ENCODE measurements at regions of chr1 and their contacts with region 1.

Region 1: GRCh38 chr1:198937231-198938031 is 298.6 kb downstream of the PTPRC start:
- DNase-seq: peak; percentile 65
- ATAC-seq: peak; percentile 93
- H3K4me3 Mint-ChIP-seq: no peak overlapping the region
- H3K27ac Mint-ChIP-seq: peak overlapping the region; percentile 85
- H3K4me1 Mint-ChIP-seq: peaks cover 21% of the 10 kb centered on the region
- H3K27me3 Mint-ChIP-seq: no peaks in the 10 kb centered on the region

Region 2: DNA sequence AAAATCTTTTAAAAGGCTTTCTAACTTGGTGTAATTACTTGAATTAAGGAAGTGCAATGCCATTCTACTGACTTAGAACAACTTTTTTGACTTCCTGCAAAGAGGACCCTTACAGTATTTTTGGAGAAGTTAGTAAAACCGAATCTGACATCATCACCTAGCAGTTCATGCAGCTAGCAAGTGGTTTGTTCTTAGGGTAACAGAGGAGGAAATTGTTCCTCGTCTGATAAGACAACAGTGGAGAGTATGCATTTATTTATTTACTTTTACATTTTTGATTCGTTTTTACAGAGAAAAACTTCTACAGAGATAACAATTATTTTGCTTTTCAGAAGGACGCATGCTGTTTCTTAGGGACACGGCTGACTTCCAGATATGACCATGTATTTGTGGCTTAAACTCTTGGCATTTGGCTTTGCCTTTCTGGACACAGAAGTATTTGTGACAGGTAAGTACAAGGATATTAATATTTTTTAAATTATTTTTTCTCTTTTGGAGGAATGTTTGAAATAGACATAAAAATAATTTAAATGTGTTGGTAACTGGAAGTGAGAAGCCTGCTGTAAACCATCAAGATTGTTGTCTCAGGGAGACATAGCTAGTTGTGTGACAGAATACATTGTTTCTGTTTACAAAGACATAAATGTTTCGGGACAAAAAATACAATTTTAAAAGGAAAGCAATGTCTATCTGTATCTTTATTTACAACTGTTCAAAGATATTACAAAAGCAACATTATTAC is 298.4 kb before region 1 on chr1 and contains the start of gene PTPRC:
- CTCF ChIA-PET with region 1: no interaction called
- POLR2A ChIA-PET with region 1: no interaction called
- intact Hi-C with region 1: loop called in 1 of 2 experiments (anchors 10 kb)
- DNase-seq: no peak
- ATAC-seq: peak; percentile 62
- H3K4me3 Mint-ChIP-seq: peak within 1 kb of the TSS; percentile 87
- H3K27ac Mint-ChIP-seq: peak within 1 kb of the TSS; percentile 99
- H3K4me1 Mint-ChIP-seq: peaks cover 52% of the 10 kb centered on the region
- H3K27me3 Mint-ChIP-seq: no peaks in the 10 kb centered on the region
- total RNA-seq, gene PTPRC: 458 to 564 TPM

Region 3: DNA sequence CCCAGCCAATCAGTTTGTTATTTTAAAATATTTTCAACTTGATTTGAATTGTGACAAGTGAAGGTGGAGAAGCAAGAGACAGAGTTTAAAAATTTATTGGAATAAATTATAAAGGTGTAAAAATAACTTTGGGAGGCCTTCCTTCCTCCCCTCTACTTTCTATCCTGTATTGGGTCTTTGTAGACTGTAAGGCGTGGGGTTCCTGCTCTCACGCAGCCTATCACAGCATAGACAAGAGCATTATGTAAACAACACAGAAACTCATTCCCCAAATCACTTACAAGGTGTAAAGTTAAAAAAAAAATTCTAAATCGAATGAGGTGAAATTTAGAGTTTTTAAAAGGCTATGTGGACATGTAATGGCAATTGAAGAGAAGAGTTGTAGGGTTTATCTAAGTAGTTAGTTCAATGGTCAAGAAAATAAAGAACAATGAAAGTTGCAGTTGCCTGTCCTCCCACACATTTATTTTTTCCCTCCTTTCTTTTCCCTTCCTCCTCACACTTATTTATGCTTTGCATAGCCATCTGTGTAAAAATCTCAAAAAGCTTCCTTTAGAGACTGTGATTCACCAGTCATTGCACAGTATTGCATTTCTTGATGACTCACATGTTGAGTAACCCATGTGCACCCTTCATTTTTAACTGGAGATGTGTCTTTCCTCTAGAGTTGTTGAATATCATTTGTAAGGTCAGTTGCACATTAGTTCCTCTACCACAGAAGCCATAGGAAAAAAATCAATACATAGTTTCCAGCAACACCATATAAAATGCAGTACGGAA is 56.4 kb before region 1 on chr1:
- CTCF ChIA-PET with region 1: no interaction called
- POLR2A ChIA-PET with region 1: interaction called, 3 read pairs
- intact Hi-C with region 1: loop called in 1 of 2 experiments (anchors 5 kb)
- DNase-seq: peak; percentile 14
- ATAC-seq: peak; percentile 93
- H3K4me3 Mint-ChIP-seq: no peak overlapping the region
- H3K27ac Mint-ChIP-seq: peak overlapping the region; percentile 86
- H3K4me1 Mint-ChIP-seq: peaks cover 28% of the 10 kb centered on the region
- H3K27me3 Mint-ChIP-seq: no peaks in the 10 kb centered on the region

Region 4: DNA sequence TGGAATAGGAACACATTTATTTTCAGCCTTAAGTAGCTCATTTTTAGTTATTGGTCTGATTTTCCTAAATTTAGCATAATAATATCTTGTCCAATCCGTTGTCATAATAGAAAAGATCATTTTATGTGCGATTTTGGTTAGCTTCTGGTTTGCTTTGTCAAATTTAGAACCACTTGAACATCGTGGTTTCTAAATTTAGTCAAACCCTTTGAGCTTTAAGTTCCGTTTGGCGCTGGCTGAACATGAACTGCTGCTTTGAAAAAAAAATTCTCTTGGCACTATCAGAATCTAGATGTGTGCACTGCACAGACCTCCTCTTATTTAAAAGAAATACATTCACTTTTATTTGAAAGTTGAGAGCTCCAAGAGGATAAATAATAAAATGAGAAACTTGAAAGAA is 72.0 kb after region 1 on chr1:
- CTCF ChIA-PET with region 1: no interaction called
- POLR2A ChIA-PET with region 1: no interaction called
- intact Hi-C with region 1: loop called in 1 of 2 experiments (anchors 5 kb)
- DNase-seq: peak; percentile 32
- ATAC-seq: peak; percentile 61
- H3K4me3 Mint-ChIP-seq: no peak overlapping the region
- H3K27ac Mint-ChIP-seq: no peak overlapping the region
- H3K4me1 Mint-ChIP-seq: peaks cover 19% of the 10 kb centered on the region
- H3K27me3 Mint-ChIP-seq: no peaks in the 10 kb centered on the region

Region 5: DNA sequence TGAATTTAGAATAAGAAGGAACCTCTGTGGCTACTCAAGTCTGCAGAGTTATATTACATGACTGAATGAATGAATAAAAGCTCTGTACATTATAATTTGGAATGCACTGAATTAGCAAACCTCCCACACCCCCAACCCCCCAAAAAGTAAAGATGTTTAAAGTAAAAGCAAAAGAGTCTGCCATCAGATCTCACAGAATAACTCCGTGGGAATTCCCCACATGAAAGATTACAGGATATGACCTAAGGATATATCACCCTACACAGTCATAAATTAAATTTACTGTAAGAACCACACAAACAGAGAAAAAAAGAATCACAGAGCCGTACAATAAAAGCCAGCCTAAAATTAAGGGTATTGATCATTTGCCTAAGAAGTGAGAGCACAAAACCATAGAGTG is 288.7 kb after region 1 on chr1:
- CTCF ChIA-PET with region 1: no interaction called
- POLR2A ChIA-PET with region 1: no interaction called
- intact Hi-C with region 1: loop called (anchors 1 to 5 kb)
- DNase-seq: peak; percentile 53
- ATAC-seq: peak; percentile 98
- H3K4me3 Mint-ChIP-seq: peak overlapping the region; percentile 47
- H3K27ac Mint-ChIP-seq: peak overlapping the region; percentile 78
- H3K4me1 Mint-ChIP-seq: peaks cover 25% of the 10 kb centered on the region
- H3K27me3 Mint-ChIP-seq: no peaks in the 10 kb centered on the region

Region 6: GRCh38 chr1:199646761-199647160 is 709.3 kb after region 1 on chr1:
- CTCF ChIA-PET with region 1: no interaction called
- POLR2A ChIA-PET with region 1: no interaction called
- intact Hi-C with region 1: no loop called
- DNase-seq: no peak
- ATAC-seq: no peak
- H3K4me3 Mint-ChIP-seq: no peak overlapping the region
- H3K27ac Mint-ChIP-seq: no peak overlapping the region
- H3K4me1 Mint-ChIP-seq: no peaks in the 10 kb centered on the region
- H3K27me3 Mint-ChIP-seq: peaks cover 6% of the 10 kb centered on the region

Measured in activated CD4-positive, alpha-beta T cell treated with anti-CD3 and anti-CD28 coated beads for 36 hours (primary cell).